OCI-LY7 (cell line): ENCODE measurements at regions of chr4 and their contacts with region 1.

Region 1: GRCh38 chr4:173025131-173025530 is 143.5 kb upstream of the GALNT7 start:
- DNase-seq: peak; percentile 78
- H3K4me3 ChIP-seq: no peak overlapping the region
- H3K27ac ChIP-seq: no peak overlapping the region
- H3K4me1 ChIP-seq: no peaks in the 10 kb centered on the region
- CTCF ChIP-seq: peak; percentile 90

Region 2: DNA sequence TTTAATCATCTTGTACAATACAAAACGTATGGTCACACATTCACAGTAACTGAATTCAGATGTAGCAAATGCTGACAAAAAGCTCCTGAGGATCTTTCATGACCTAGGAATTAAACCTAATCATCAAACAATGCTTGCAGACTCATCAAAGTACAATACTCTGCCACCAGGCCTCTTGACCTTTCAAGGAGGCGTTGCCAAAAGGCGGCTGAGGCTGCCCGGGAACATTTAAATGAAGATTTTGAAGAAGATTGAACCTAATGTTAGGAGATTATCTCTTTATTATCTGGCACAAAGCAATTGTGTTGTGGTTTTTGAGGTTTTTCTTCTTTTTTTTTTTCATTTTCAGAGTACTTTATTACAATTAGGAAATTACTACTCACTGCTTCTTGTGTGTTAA is 871.4 kb before region 1 on chr4:
- CTCF ChIA-PET with region 1: no interaction called
- POLR2A ChIA-PET with region 1: no interaction called
- intact Hi-C with region 1: no loop called
- DNase-seq: no peak
- H3K4me3 ChIP-seq: no peak overlapping the region
- H3K27ac ChIP-seq: no peak overlapping the region
- H3K4me1 ChIP-seq: no peaks in the 10 kb centered on the region
- CTCF ChIP-seq: no peak

Region 3: DNA sequence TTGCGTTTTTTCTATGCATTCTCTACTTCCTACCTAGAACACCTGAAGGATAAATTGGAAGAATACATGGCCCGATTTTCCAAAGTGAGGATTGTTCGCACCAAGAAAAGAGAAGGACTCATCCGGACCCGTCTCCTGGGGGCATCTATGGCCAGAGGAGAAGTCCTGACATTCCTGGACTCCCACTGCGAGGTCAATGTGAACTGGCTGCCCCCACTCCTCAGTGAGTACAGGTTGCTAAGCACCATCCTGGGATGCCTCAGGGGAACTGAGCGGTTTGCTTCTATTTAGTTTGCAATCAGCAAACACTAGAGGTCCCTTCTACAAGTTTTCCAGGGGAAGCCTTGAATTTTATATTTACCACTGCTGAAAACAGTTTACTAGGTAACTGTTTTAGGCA is 215.8 kb before region 1 on chr4:
- CTCF ChIA-PET with region 1: no interaction called
- POLR2A ChIA-PET with region 1: no interaction called
- intact Hi-C with region 1: no loop called
- DNase-seq: no peak
- H3K4me3 ChIP-seq: no peak overlapping the region
- H3K27ac ChIP-seq: no peak overlapping the region
- H3K4me1 ChIP-seq: no peaks in the 10 kb centered on the region
- CTCF ChIP-seq: no peak

Region 4: GRCh38 chr4:173257732-173258717 is 232.9 kb after region 1 on chr4:
- CTCF ChIA-PET with region 1: no interaction called
- POLR2A ChIA-PET with region 1: interaction called, 4 read pairs
- intact Hi-C with region 1: loop called (anchors 1 kb)
- DNase-seq: peak; percentile 76
- H3K4me3 ChIP-seq: no peak overlapping the region
- H3K27ac ChIP-seq: no peak overlapping the region
- H3K4me1 ChIP-seq: peaks cover 22% of the 10 kb centered on the region
- CTCF ChIP-seq: peak; percentile 95

Region 5: GRCh38 chr4:173301518-173302201 is 276.5 kb after region 1 on chr4:
- CTCF ChIA-PET with region 1: interaction called, 4 read pairs
- POLR2A ChIA-PET with region 1: interaction called, 5 read pairs
- intact Hi-C with region 1: loop called (anchors 5 kb)
- DNase-seq: peak; percentile 53
- H3K4me3 ChIP-seq: no peak overlapping the region
- H3K27ac ChIP-seq: no peak overlapping the region
- H3K4me1 ChIP-seq: no peaks in the 10 kb centered on the region
- CTCF ChIP-seq: peak; percentile 98